ENCODE measurements at regions of chr12 and their contacts with region 1.

Region 1: DNA sequence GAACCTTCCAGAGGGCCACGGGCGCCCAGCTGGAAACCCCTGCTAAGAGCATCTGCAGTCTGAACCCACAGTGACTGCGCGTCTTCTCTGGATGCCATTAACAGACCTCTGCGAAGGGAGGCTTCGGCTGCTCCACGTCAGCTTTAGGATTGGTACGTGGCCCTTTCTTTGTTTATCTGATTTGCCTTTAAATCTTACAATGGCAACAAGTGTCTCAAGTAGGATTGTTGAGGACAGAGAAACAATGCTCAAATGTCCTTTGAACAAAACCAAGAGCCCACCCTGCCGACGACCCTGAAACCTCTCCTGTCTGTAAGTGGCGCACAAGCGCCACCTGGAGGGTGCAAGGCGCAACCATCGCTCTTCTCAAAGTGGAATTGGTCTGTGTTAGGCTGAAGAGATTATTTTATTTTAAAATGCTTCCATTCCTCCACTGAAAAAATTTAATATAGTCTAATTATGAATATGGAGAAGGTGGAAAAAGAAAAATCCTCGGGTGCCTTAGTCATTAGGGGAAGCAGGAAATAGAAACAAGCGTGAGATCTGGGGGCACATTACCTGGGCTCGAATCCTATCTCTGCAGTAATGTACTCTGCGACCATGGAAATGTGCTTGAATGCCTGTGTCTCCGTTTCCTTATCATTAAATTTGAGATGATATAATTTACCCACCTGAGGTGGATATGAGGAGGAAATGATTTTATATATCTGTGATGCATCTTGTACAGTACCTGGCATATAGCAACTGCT is 82.6 kb upstream of the PTPRB start:
- DNase-seq: no peak
- ATAC-seq: peak; percentile 75
- H3K4me3 ChIP-seq: no peak overlapping the region
- H3K27ac ChIP-seq: no peak overlapping the region
- H3K4me1 ChIP-seq: no peaks in the 10 kb centered on the region
- H3K27me3 ChIP-seq: no peaks in the 10 kb centered on the region; a peak in 1 of 4 replicates
- CTCF ChIP-seq: peak; percentile 72 to 88 (median 75)
- EP300 ChIP-seq: no peak
- POLR2A ChIP-seq: no peak
- RAD21 ChIP-seq: peak; percentile 80

Region 2: DNA sequence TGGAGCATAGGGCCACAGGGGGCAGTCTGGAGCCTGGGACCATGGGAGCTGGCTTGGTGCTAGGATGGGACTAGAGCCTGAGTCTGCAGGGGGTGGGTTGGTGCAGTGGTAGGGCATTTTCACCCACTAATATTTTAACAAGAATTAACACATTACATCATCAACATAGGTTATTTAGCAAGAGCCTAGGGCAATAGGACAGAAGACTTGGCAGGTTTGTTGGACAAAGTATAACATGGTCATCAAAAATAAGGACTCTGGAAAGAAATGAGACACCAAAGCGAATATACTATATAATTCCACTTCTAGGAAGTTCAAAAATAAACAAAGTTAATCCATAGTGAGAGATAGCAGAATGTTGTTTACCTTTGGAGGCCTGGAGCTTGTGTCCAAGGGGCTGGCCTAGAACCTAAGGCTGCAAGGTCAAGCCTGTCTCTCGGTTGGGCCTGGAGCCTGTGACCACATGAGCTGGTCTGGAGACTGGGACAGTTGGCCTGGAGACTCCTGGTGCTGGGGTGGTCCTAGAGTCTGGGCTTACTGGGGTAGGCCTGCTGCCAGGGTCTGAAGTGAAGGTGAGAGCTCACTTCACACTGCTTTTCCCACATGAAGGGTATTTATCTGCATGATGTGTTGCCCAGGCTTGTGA is 504.8 kb before region 1 on chr12:
- CTCF ChIA-PET with region 1: no interaction called
- POLR2A ChIA-PET with region 1: no interaction called
- RAD21 ChIA-PET with region 1: no interaction called
- SMC1A ChIA-PET with region 1: no interaction called
- in situ Hi-C with region 1: no loop called
- intact Hi-C with region 1: loop called (anchors 10 kb)
- DNase-seq: no peak
- ATAC-seq: no peak
- H3K4me3 ChIP-seq: no peak overlapping the region
- H3K27ac ChIP-seq: no peak overlapping the region
- H3K4me1 ChIP-seq: no peaks in the 10 kb centered on the region
- H3K27me3 ChIP-seq: no peaks in the 10 kb centered on the region
- CTCF ChIP-seq: no peak
- EP300 ChIP-seq: no peak
- POLR2A ChIP-seq: no peak
- RAD21 ChIP-seq: no peak

Region 3: GRCh38 chr12:70590051-70590450 is 129.8 kb before region 1 on chr12:
- CTCF ChIA-PET with region 1: interaction called, 3 read pairs
- POLR2A ChIA-PET with region 1: no interaction called
- RAD21 ChIA-PET with region 1: interaction called, 3 read pairs
- SMC1A ChIA-PET with region 1: no interaction called
- in situ Hi-C with region 1: loop called (anchors 5 kb)
- intact Hi-C with region 1: loop called (anchors 1 kb)
- DNase-seq: no peak
- ATAC-seq: peak; percentile 93
- H3K4me3 ChIP-seq: no peak overlapping the region
- H3K27ac ChIP-seq: no peak overlapping the region
- H3K4me1 ChIP-seq: no peaks in the 10 kb centered on the region
- H3K27me3 ChIP-seq: no peaks in the 10 kb centered on the region
- CTCF ChIP-seq: peak; percentile 58 to 83 (median 83)
- EP300 ChIP-seq: no peak
- POLR2A ChIP-seq: no peak
- RAD21 ChIP-seq: peak; percentile 62